ENCODE measurements at regions of chr20 and their contacts with region 1.

Region 1: GRCh38 chr20:5886788-5887187 is 63.5 kb downstream of the TRMT6 start:
- DNase-seq: peak; percentile 31 to 69 (median 49)
- ATAC-seq: peak; percentile 86 to 90
- H3K4me3 ChIP-seq: no peak overlapping the region
- H3K27ac ChIP-seq: peak overlapping the region; percentile 96
- H3K4me1 ChIP-seq: peaks cover 2% of the 10 kb centered on the region
- H3K27me3 ChIP-seq: no peaks in the 10 kb centered on the region

Region 2: GRCh38 chr20:5835321-5835821 is 51.4 kb before region 1 on chr20:
- intact Hi-C with region 1: loop called in 1 of 4 experiments (anchors 10 kb)
- DNase-seq: peak; percentile 46 to 64 (median 51)
- ATAC-seq: peak; percentile 57 to 77
- H3K4me3 ChIP-seq: no peak overlapping the region
- H3K27ac ChIP-seq: peak overlapping the region; percentile 1
- H3K4me1 ChIP-seq: peaks cover 5% of the 10 kb centered on the region
- H3K27me3 ChIP-seq: no peaks in the 10 kb centered on the region

Measured in right cardiac atrium (tissue), 5 donors.